ENCODE measurements at regions of chr12 and their contacts with region 1.

Region 1: GRCh38 chr12:99386907-99387306 is 260.6 kb upstream of the GARIN6 start:
- DNase-seq: no peak
- ATAC-seq: no peak
- H3K4me3 Mint-ChIP-seq: no peak overlapping the region
- H3K27ac Mint-ChIP-seq: no peak overlapping the region
- H3K4me1 Mint-ChIP-seq: no peaks in the 10 kb centered on the region
- H3K27me3 Mint-ChIP-seq: no peaks in the 10 kb centered on the region

Region 2: DNA sequence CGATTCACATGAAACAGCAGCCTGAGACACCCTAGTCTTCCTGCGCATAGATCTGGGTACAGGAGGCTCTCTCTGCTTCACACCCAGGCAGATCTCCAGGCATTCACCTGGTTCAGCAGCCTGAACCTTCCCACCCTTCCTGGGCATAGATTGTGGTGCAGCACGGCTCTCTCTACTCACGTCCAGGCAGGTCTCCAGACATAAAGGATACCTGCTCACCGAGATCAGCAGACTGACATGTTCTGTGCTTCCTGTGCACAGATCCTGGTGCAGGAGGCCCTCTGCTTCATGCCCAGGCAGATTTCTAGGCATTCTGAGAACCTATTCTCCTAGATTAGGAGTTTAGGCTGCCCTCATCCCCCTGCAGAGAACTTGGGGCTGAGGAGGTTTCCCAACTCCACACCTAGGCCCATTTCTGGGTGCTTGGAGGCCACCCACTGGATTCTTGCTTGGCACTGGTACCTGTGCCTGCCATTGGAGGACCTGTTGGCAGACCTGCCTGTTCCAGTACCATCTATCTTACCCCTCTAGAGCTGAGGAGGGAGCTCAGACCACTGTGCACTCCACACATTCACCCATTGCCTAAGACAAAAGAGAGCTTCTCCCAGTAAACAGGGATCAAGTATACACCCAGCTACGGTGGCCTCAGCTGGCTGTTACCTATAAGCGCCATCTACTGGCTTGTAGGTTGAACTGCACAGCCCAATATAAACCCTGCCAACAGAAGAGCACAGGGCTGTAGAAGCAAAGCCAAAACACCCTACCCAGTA is 232.7 kb after region 1 on chr12:
- CTCF ChIA-PET with region 1: no interaction called
- POLR2A ChIA-PET with region 1: no interaction called
- intact Hi-C with region 1: loop called in 1 of 2 experiments (anchors 5 kb)
- DNase-seq: peak; percentile 19
- ATAC-seq: no peak
- H3K4me3 Mint-ChIP-seq: no peak overlapping the region
- H3K27ac Mint-ChIP-seq: no peak overlapping the region
- H3K4me1 Mint-ChIP-seq: no peaks in the 10 kb centered on the region
- H3K27me3 Mint-ChIP-seq: no peaks in the 10 kb centered on the region

Region 3: DNA sequence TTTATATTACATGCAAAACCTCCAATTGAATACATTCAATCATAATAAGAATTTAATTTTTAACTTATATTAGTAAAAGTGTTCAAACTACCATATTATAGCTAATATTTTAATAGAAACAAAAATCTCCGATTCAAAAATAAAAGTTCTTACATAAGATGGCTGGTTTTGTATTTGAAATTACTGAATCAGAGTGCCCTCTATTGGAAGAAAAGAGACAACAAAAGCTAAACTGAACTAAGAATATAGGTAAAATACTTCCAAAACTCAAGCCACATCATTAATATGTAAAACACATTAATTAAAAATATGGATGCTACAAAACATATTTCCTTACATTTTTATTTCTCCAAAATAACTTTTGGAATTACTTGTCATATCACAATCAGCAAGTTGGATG is 380.9 kb after region 1 on chr12:
- CTCF ChIA-PET with region 1: no interaction called
- POLR2A ChIA-PET with region 1: no interaction called
- intact Hi-C with region 1: loop called in 1 of 2 experiments (anchors 2 kb)
- DNase-seq: no peak
- ATAC-seq: no peak
- H3K4me3 Mint-ChIP-seq: no peak overlapping the region
- H3K27ac Mint-ChIP-seq: no peak overlapping the region
- H3K4me1 Mint-ChIP-seq: no peaks in the 10 kb centered on the region
- H3K27me3 Mint-ChIP-seq: no peaks in the 10 kb centered on the region

Measured in activated CD4-positive, alpha-beta T cell treated with anti-CD3 and anti-CD28 coated beads for 36 hours (primary cell).